Cardiac septum (tissue), 1 donor: ENCODE measurements at regions of chr20 and their contacts with region 1.

Region 1: GRCh38 chr20:25259788-25260254 is 11.9 kb downstream of the PYGB start:
- DNase-seq: peak; percentile 60

Region 2: GRCh38 chr20:25195014-25195961 is 64.5 kb before region 1 on chr20 and contains the start of gene ENTPD6:
- intact Hi-C with region 1: no loop called
- DNase-seq: peak; percentile 95
- total RNA-seq, gene ENTPD6: 102 TPM

Region 3: GRCh38 chr20:25273541-25274358 is 13.9 kb after region 1 on chr20:
- intact Hi-C with region 1: loop called (anchors 2 kb)
- DNase-seq: peak; percentile 64